Activated CD4-positive, alpha-beta T cell treated with anti-CD3 and anti-CD28 coated beads, Interleukin-2, amount 10 ng/mL, durations not matched to agents 24 days and 14 days (primary cell): ENCODE measurements at regions of chr5 and their contacts with region 1.

Region 1: GRCh38 chr5:14399054-14399692 is 182.4 kb upstream of the OTULINL start:
- DNase-seq: peak; percentile 82
- H3K4me3 Mint-ChIP-seq: no peak overlapping the region
- H3K27ac Mint-ChIP-seq: no peak overlapping the region
- H3K4me1 Mint-ChIP-seq: peaks cover 34% of the 10 kb centered on the region
- H3K27me3 Mint-ChIP-seq: no peaks in the 10 kb centered on the region

Region 2: GRCh38 chr5:14351845-14352712 is 47.1 kb before region 1 on chr5:
- intact Hi-C with region 1: loop called (anchors 1 kb)
- DNase-seq: peak; percentile 88
- H3K4me3 Mint-ChIP-seq: no peak overlapping the region
- H3K27ac Mint-ChIP-seq: no peak overlapping the region
- H3K4me1 Mint-ChIP-seq: peaks cover 2% of the 10 kb centered on the region
- H3K27me3 Mint-ChIP-seq: peaks cover 2% of the 10 kb centered on the region

Region 3: GRCh38 chr5:14364576-14365472 is 34.3 kb before region 1 on chr5:
- intact Hi-C with region 1: loop called (anchors 2 kb)
- DNase-seq: peak; percentile 62
- H3K4me3 Mint-ChIP-seq: peak overlapping the region; percentile 56
- H3K27ac Mint-ChIP-seq: peak overlapping the region; percentile 68
- H3K4me1 Mint-ChIP-seq: peaks cover 44% of the 10 kb centered on the region
- H3K27me3 Mint-ChIP-seq: no peaks in the 10 kb centered on the region

Region 4: DNA sequence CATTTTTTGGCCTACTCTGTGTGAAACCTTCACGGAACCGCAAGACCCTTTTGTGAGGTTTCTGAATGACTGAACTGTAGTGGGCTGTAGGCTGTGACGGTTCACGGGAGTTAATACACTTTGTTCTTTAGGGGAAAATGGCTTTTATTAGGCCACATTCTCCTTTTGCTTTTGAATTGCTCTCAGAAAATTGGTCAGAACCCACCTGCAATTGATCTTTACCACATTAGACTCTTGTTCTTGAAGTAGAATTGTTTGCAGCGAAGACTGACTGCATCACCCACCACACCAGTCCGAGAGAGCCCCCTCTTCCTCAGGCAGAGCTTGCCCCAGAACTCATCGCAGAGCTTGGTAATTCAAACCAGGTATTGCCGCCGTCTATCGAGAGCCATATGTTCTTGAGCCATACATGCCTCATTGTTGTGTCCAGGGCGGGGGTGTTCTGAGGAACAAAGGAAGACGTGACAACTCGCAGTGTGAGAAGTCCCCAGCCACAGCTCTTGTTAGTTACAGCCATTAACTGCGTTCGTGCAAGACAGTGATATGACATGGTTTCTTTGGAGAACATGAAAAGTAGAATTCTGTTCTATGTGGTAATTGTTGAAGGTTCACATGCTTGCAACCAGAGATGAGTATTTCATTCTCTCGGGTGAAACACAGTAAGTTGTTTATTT is 16.0 kb after region 1 on chr5:
- intact Hi-C with region 1: loop called (anchors 2 kb)
- DNase-seq: peak; percentile 66
- H3K4me3 Mint-ChIP-seq: peak overlapping the region; percentile 64
- H3K27ac Mint-ChIP-seq: peak overlapping the region; percentile 93
- H3K4me1 Mint-ChIP-seq: peaks cover 46% of the 10 kb centered on the region
- H3K27me3 Mint-ChIP-seq: no peaks in the 10 kb centered on the region

Region 5: GRCh38 chr5:14439087-14439871 is 40.1 kb after region 1 on chr5:
- intact Hi-C with region 1: loop called (anchors 1 kb)
- DNase-seq: no peak
- H3K4me3 Mint-ChIP-seq: no peak overlapping the region
- H3K27ac Mint-ChIP-seq: no peak overlapping the region
- H3K4me1 Mint-ChIP-seq: peaks cover 27% of the 10 kb centered on the region
- H3K27me3 Mint-ChIP-seq: peaks cover 5% of the 10 kb centered on the region

Region 6: DNA sequence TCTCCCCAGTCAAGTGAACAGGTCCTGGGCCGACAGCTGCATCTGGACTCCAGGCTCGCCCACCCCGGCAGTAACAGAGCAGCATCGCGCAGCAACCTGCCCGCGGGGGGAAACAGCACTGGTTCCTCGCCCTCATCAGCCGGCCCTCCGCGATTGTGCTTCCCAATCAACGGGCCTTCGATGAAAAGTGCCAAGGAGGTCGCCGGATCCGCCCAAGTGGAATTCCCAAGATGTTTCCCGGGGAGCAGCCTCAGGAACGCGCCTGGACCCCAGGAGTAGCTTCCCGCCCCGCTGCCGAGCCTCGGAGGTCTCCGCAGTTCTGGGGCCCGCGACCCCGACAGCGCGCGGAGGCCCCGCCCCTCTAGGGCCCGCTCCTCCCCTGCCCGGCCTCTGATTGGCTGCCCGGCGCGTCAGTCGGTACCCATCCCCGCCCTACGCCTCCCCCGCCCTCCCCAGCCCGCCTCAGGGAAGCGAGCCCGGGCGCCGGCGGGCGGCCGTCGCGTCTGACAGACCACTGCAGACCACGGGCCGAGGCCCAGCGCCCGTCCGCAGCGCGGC is 182.2 kb after region 1 on chr5 and contains the start of gene OTULINL:
- intact Hi-C with region 1: loop called (anchors 1 kb)
- DNase-seq: peak; percentile 95
- H3K4me3 Mint-ChIP-seq: peak within 1 kb of the TSS; percentile 83
- H3K27ac Mint-ChIP-seq: peak within 1 kb of the TSS; percentile 69
- H3K4me1 Mint-ChIP-seq: peaks cover 31% of the 10 kb centered on the region
- H3K27me3 Mint-ChIP-seq: peaks cover 16% of the 10 kb centered on the region
- total RNA-seq, gene OTULINL: 9.4 and 11.4 TPM in 2 replicates

Region 7: DNA sequence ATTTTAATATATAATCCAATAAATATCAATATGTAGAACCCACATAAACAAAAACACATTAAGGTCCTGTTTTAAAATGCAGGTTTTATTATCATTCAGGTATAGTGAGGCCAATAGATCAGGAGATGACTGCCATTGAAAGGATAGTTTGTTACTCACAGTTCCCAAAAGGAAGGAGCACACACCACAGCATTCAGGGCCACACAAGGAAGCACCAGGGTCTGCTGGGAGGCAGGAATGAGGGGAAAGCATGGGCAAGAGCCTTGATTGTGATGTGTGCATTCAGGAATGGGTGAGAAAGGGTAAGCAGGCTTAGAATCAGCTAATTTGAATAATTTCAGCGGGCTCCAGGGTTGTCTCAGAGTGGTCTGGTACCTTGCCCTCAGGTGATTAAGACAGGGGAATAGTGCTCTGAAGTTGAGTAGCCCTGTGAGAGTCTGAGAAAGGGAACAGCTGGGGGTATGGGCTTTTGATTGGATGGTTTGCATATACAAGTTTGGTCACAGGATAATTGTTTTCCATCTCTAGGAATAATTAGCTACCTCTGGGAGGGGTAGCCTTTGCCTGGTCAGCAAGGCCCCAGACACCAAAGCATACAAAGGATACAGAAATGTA is 245.6 kb after region 1 on chr5:
- intact Hi-C with region 1: loop called (anchors 1 kb)
- DNase-seq: no peak
- H3K4me3 Mint-ChIP-seq: no peak overlapping the region
- H3K27ac Mint-ChIP-seq: no peak overlapping the region
- H3K4me1 Mint-ChIP-seq: peaks cover 5% of the 10 kb centered on the region
- H3K27me3 Mint-ChIP-seq: peaks cover 30% of the 10 kb centered on the region